ENCODE measurements at regions of chr4 and their contacts with region 1.

Region 1: DNA sequence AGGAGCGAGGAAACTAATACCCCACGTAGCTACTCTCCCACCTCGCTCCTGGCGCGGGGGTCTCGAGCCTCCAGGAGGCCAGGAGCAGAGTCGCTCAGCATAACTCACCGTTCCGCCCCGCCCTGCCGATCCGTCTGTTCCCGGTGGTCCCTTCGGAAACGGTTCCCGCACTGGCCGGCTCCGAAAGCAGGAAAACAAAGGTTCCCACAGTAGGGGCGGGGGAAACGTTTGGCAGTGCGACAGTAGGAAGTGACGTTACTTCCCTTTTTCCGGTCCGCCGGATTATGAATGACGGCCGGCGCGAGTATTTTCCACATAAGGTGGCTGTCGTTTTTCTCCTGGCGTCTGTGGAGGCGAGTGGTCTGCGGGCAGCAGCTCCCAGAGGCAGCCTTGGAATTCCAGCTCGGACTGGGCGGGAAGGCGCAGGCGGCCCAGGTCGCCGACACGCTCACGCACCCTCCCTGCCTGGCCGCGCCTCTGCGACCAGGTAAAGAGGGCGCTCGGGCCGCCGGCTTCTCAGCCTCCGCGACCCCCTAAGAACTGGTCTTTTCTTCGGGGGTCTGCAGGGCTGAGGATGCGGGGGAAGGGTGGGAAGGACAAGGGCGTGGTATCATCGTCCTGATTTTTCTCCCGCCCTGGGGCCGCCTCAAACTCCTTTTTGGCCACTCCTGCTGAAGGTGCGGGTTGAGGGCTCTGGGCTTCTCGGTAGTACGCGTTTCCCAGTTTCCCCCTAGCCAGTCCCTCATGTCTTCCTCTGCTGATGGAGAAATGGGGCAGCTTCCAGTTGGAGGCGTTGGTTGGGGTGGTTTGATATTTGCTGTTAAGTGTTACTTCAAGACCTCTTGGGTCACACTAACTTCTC is at the starts of genes GSTCD and INTS12:
- DNase-seq: peak; percentile 66
- ATAC-seq: peak; percentile 81
- H3K4me3 ChIP-seq: peak within 1 kb of the TSS; percentile 99
- H3K27ac ChIP-seq: peak within 1 kb of the TSS; percentile 81
- H3K4me1 ChIP-seq: no peaks in the 10 kb centered on the region
- H3K27me3 ChIP-seq: no peaks in the 10 kb centered on the region
- CTCF ChIP-seq: no peak
- EP300 ChIP-seq: peak in 1 of 2 experiments; percentile 46; a peak in 1 of 4 replicates
- POLR2A ChIP-seq: peak; percentile 93
- RAD21 ChIP-seq: peak; percentile 48; the same call in 1 of the 2 replicates
- polyA plus RNA-seq, gene GSTCD: 4.3 to 5.7 TPM
- polyA plus RNA-seq, gene INTS12: 40.4 to 43.9 TPM

Region 2: DNA sequence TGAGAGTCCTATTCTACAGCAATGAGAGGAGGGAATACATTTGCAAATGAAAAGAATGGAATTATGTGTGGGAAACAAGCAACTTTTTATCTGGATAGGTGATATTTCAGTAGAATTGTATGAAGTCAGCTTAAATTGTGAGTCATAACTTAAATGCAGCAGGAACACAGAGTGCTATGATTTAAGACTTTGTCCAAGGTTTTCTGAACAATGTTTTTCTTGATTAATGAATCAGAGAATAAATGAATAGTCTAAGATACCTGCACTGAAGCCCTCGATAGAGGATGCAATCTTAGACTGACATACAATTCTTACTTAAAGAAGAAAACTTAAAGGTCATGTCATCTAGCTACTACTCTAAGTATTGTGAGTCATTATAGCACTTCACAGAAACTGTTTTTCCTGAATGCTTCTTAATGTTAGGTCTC is 148.3 kb before region 1 on chr4:
- CTCF ChIA-PET with region 1: no interaction called
- POLR2A ChIA-PET with region 1: no interaction called
- RAD21 ChIA-PET with region 1: no interaction called
- SMC1A ChIA-PET with region 1: no interaction called
- in situ Hi-C with region 1: no loop called
- intact Hi-C with region 1: no loop called
- DNase-seq: no peak
- ATAC-seq: no peak
- H3K4me3 ChIP-seq: no peak overlapping the region
- H3K27ac ChIP-seq: no peak overlapping the region
- H3K4me1 ChIP-seq: no peaks in the 10 kb centered on the region
- H3K27me3 ChIP-seq: no peaks in the 10 kb centered on the region
- CTCF ChIP-seq: no peak
- EP300 ChIP-seq: no peak
- POLR2A ChIP-seq: no peak
- RAD21 ChIP-seq: no peak

Region 3: DNA sequence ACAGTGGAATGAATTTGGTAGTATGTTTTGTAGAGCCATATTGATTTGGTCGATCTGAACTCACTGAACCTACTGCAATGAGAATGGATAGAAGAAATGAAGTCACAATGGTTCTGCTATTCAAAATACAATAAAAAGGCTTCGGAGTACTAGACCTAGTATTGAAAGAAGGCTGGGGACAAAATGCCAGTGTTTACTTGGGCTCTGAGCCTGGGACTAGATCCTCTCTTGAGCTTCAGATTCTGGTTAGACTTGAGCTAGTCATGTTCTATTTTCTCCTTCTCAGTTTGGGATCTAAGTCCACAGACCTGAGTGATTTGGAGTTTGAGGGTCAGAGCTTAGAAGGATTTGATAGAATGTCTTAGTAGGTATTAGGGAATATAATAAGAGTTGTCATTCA is 10.2 kb before region 1 on chr4:
- CTCF ChIA-PET with region 1: interaction called, 6 read pairs
- POLR2A ChIA-PET with region 1: interaction called, 5 read pairs
- RAD21 ChIA-PET with region 1: interaction called, 3 read pairs
- SMC1A ChIA-PET with region 1: interaction called, 10 read pairs
- in situ Hi-C with region 1: no loop called
- intact Hi-C with region 1: no loop called
- DNase-seq: no peak
- ATAC-seq: no peak
- H3K4me3 ChIP-seq: no peak overlapping the region
- H3K27ac ChIP-seq: no peak overlapping the region
- H3K4me1 ChIP-seq: no peaks in the 10 kb centered on the region
- H3K27me3 ChIP-seq: no peaks in the 10 kb centered on the region
- CTCF ChIP-seq: no peak
- EP300 ChIP-seq: no peak
- POLR2A ChIP-seq: no peak
- RAD21 ChIP-seq: no peak

Measured in GM12878 (cell line).